ENCODE measurements at regions of chr13 and their contacts with region 1.

Region 1: DNA sequence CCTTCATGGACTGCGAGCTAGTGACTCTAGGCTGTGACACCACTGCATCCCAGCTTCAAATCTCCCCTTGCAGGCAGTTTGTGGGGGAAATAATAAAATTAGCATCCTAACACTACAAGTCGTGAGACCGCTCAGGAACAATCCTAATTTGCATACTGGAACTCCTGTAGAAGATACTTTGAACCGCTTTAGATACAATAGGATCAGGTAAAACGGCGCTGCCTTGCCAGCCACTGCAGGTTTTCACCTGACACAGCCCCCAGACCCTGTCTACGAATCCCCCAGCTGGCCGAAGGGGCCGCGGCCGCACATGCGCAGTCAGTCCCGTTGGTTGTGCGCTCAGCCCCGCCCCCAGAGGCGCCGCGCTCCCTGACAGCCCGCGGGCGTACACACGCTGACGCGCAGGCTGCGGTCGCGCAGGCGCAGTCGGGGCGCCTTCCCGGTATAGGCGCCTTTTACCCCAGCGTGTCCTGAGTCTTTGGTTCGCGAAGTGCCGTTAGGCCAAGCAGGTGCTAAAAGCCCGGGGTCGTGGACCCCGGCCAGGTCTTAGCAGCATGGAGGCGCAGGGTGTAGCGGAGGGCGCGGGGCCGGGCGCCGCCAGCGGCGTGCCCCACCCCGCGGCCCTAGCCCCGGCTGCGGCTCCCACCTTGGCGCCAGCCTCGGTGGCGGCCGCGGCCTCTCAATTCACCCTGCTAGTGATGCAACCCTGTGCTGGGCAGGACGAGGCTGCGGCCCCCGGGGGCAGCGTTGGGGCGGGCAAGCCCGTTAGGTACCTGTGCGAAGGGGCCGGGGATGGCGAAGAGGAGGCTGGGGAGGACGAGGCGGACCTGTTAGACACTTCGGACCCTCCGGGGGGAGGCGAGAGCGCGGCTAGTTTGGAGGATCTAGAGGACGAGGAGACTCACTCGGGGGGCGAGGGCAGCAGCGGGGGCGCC is at the start of gene RFXAP:
- DNase-seq: peak; percentile 78 to 98 (median 88)

Region 2: GRCh38 chr13:36509367-36509766 is 309.7 kb before region 1 on chr13:
- intact Hi-C with region 1: no loop called
- DNase-seq: no peak

Region 3: DNA sequence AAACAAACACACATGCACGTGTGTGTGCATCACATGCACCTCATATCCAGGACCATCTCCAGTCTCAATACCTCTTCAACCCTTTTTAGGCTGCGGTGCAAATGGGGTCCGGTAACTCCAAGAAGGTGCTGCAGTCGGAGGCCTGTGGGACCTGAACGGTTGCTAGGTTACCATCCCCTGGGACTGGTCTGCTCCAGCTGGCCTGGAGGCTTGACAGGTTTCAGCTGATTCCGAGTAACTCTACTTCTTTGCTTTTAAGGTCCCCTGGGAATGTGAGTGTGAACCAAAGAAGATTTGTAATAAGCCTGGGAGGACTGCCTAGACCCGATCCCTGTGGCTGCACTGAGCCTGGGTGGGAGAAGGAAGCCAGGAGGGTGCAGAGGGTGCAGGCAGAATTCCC is 269.3 kb before region 1 on chr13:
- intact Hi-C with region 1: no loop called
- DNase-seq: no peak

Region 4: GRCh38 chr13:37058910-37059847 is 240.1 kb after region 1 on chr13 and contains the start of gene SUPT20H:
- intact Hi-C with region 1: loop called (anchors 2 kb)
- DNase-seq: peak; percentile 86 to 99 (median 94)

Measured in posterior cingulate gyrus (tissue), 11 donors.